GM23248 (cell line): ENCODE measurements at regions of chr3 and their contacts with region 1.

Region 1: DNA sequence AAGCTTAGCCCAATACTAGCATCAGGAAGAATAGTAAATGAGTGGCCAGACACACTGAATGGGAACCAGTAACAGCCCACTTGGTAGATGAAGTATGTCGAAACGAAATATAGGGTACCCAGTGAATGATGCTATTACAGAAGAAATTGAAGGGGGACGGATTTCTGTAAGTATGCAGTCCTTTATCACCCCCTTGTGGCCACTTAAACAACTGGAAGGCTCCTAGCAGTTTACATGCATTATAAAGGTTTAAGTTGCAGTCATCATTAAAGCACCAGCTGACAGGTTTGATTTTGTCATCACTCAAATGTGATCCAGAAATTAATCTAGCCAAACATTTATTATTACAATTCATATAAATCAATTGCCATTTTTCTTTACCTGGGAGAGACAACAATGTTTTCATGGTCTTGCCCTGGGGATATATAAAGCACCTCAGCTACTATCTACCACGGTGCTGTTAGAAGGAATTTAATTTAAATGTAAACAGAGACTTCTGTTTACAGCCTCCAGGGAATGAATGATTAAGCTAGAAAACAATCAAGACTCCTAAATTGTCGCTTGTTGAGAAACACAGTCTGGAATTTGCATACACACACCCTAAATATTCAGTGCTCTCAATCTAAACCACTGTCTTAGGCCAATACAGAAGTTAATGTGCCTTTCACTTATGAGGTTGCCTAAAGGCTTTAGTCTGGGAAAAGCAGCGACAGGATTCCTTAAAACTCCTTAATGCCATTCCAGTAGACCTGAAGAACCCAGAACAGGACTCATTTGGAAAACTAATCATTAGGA is 7.8 kb downstream of the EIF1B start:
- DNase-seq: peak; percentile 79
- H3K4me3 ChIP-seq: no peak overlapping the region
- H3K27ac ChIP-seq: no peak overlapping the region
- H3K4me1 ChIP-seq: peaks cover 5% of the 10 kb centered on the region
- H3K27me3 ChIP-seq: no peaks in the 10 kb centered on the region

Region 2: DNA sequence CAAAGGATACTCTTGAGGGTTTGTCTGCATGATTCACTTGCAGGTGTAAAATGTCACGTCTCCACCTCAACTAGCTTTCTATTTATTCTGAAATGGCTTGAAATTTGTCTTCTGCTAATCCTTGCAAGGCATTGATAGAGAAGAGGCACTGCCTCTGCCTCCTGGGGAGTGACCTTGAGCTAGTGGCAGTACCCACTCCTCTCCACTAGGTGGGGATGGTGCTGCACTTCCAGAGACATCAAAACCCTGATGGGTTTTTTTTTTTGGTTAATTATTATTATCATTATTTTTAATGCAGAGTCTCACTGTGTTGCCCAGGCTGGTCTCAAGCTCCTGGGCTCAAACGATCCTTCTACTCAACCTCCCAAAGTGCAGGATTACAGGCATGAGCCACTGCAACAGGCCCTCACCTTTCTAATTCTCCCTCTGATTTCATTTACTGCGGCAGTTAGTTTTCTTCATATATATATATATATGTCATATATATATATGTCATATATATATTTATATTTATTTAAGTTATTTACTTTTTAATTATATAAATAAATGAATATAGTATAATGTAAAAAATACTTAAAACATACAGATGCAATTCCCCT is 125.3 kb before region 1 on chr3:
- in situ Hi-C with region 1: loop called (anchors 5 kb)
- DNase-seq: peak; percentile 55
- H3K4me3 ChIP-seq: no peak overlapping the region
- H3K27ac ChIP-seq: no peak overlapping the region
- H3K4me1 ChIP-seq: no peaks in the 10 kb centered on the region
- H3K27me3 ChIP-seq: no peaks in the 10 kb centered on the region